GM10248 (cell line): ENCODE measurements at regions of chr3 and their contacts with region 1.

Region 1: GRCh38 chr3:98002717-98003116 is 30.5 kb upstream of the RIOX2 start:
- DNase-seq: no peak
- CTCF ChIP-seq: no peak

Region 2: DNA sequence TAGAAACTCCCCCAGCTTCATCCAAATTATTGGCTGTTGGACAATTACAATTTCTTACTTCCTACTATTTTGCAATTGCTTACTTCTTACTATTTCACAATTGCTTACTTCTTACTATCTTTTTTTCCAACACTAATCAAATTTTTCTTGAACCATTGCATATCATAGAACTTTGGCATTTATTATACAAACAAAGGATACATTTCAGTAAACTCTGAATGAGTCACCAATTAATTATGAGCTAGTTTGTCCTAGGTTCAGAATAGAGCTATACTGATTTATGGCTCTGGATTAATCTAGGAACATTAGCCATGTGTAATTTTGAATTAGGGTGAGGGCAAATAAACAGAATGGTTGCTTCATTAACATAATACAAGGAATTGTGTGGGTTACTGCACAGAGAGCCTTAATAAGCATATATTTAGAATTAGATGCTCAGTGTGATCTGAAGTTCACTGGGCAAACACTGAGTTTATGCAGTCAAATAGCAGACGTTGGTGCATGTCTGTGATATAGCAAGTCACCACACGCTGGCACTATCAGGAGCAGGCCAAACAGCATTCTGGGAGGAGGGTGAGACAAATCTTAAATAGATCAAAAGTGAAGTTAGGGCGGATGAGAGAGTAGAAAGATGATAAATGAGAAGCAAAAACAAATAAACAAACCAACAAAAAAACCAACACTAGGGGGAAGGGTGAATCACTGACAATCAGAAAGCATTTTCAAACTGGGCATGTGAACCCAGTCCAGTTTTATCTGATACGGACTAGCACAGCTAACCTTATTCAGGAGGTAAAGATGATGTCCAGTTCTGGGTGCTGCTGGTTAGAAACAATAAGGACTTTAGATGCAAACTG is 10.9 kb after region 1 on chr3:
- CTCF ChIA-PET with region 1: interaction called, 12 read pairs
- POLR2A ChIA-PET with region 1: no interaction called
- DNase-seq: no peak
- CTCF ChIP-seq: no peak